ENCODE measurements at regions of chr3 and their contacts with region 1.

Region 1: GRCh38 chr3:185282696-185283394 is 29.0 kb upstream of the EHHADH start:
- DNase-seq: peak; percentile 94
- H3K4me3 Mint-ChIP-seq: peak overlapping the region; percentile 77
- H3K27ac Mint-ChIP-seq: peak overlapping the region; percentile 70
- H3K4me1 Mint-ChIP-seq: peaks cover 11% of the 10 kb centered on the region
- H3K27me3 Mint-ChIP-seq: no peaks in the 10 kb centered on the region
- CTCF ChIP-seq: no peak

Region 2: GRCh38 chr3:185176750-185177359 is 106.0 kb before region 1 on chr3:
- CTCF ChIA-PET with region 1: no interaction called
- POLR2A ChIA-PET with region 1: no interaction called
- intact Hi-C with region 1: loop called (anchors 10 kb)
- DNase-seq: peak; percentile 48
- H3K4me3 Mint-ChIP-seq: no peak overlapping the region
- H3K27ac Mint-ChIP-seq: no peak overlapping the region
- H3K4me1 Mint-ChIP-seq: no peaks in the 10 kb centered on the region
- H3K27me3 Mint-ChIP-seq: no peaks in the 10 kb centered on the region
- CTCF ChIP-seq: peak; percentile 72

Region 3: DNA sequence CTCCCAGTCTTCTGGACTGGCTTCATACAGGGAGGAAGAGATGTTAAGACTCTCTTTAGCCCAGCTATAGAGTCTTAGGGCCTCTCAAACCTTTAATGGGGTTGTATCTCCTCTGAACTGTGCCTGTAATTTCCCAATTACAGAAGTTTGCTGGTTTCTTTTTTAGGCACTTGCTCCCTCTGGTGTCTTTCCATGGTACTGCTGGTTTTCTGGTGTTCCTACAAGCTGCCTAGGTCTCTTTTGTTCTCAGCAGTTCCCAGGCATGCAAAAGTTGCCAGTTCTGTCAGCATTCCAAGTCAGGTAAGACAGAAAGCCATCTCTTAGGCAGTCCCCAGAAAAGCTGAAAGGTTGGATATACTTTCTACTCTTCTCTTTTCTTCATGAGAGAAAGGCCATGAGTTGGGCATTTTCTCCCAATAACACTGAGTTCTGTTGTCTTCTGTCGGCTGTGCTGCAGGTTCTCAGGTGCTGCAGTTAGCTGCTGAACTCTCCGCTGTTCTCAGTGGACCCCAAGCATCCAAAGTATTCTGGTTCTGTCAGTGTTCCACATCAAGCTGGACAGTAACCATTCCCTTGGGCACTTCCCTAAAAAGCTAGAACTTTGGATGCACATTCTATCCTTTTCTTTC is 25.4 kb after region 1 on chr3:
- CTCF ChIA-PET with region 1: interaction called, 11 read pairs
- POLR2A ChIA-PET with region 1: interaction called, 4 read pairs
- intact Hi-C with region 1: no loop called
- DNase-seq: peak; percentile 75
- H3K4me3 Mint-ChIP-seq: no peak overlapping the region
- H3K27ac Mint-ChIP-seq: no peak overlapping the region
- H3K4me1 Mint-ChIP-seq: peaks cover 1% of the 10 kb centered on the region
- H3K27me3 Mint-ChIP-seq: no peaks in the 10 kb centered on the region
- CTCF ChIP-seq: peak; percentile 67

Region 4: GRCh38 chr3:185362850-185363661 is 80.2 kb after region 1 on chr3 and contains the start of gene MAP3K13:
- CTCF ChIA-PET with region 1: no interaction called
- POLR2A ChIA-PET with region 1: interaction called, 13 read pairs
- intact Hi-C with region 1: no loop called
- DNase-seq: peak; percentile 94
- H3K4me3 Mint-ChIP-seq: peak within 1 kb of the TSS; percentile 83
- H3K27ac Mint-ChIP-seq: peak within 1 kb of the TSS; percentile 80
- H3K4me1 Mint-ChIP-seq: peaks cover 13% of the 10 kb centered on the region
- H3K27me3 Mint-ChIP-seq: no peaks in the 10 kb centered on the region
- CTCF ChIP-seq: no peak
- total RNA-seq, gene MAP3K13: 15.8 and 23.7 TPM in 2 replicates